Caco-2 (cell line): ENCODE measurements at regions of chr6 and their contacts with region 1.

Region 1: GRCh38 chr6:142207265-142207877 is 60.3 kb downstream of the VTA1 start:
- DNase-seq: peak; percentile 54 to 69
- H3K4me3 ChIP-seq: no peak overlapping the region
- H3K4me3 Mint-ChIP-seq: no peak overlapping the region
- H3K27ac Mint-ChIP-seq: no peak overlapping the region
- H3K4me1 ChIP-seq: no peaks in the 10 kb centered on the region
- H3K4me1 Mint-ChIP-seq: no peaks in the 10 kb centered on the region
- H3K27me3 ChIP-seq: no peaks in the 10 kb centered on the region
- H3K27me3 Mint-ChIP-seq: no peaks in the 10 kb centered on the region
- CTCF ChIP-seq: peak; percentile 81 to 87

Region 2: DNA sequence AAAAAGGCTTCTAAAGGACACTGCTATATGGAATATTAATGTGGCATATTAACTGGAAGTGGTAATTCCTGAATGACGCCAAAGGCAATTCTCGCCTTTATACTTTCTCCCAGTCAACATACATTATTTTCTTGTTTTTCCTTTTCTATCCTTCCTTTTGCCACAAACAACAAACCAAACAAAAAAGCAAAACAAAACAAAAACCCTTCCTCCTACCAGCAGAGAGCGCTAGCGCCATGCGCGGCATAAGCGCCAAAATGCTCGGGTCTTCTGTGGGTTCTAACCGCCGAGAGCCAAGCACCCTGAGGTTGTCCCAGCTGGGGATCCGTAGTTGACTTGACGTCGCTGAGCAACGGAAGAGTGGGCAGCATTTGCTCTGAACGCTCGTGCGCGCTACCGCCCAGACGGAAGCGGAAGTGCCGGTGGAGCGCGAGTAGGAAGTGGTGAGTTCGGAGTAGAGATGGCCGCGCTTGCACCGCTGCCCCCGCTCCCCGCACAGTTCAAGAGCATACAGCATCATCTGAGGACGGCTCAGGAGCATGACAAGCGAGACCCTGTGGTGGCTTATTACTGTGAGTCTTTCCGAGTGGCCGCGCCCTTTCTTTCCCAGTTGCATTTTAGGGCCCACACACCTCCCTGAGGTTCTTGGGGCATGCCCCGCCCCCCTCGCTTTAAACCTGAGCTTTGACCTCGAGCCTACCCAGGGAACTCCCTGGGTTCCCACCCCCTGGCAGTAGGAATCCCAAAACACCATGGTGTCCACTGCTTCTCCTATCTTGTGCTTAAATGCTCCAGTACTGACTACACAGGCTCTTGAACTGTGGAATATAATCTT is 60.3 kb before region 1 on chr6 and contains the starts of genes NMBR and VTA1:
- CTCF ChIA-PET with region 1: interaction called, 15 read pairs
- POLR2A ChIA-PET with region 1: interaction called, 3 read pairs
- intact Hi-C with region 1: loop called (anchors 1 kb)
- DNase-seq: peak; percentile 97 to 99
- H3K4me3 ChIP-seq: peak within 1 kb of the TSS; percentile 55
- H3K4me3 Mint-ChIP-seq: peak within 1 kb of the TSS; percentile 96
- H3K27ac Mint-ChIP-seq: peak within 1 kb of the TSS; percentile 85
- H3K4me1 ChIP-seq: no peaks in the 10 kb centered on the region
- H3K4me1 Mint-ChIP-seq: peaks cover 21% of the 10 kb centered on the region
- H3K27me3 ChIP-seq: no peaks in the 10 kb centered on the region
- H3K27me3 Mint-ChIP-seq: peaks cover 7% of the 10 kb centered on the region
- CTCF ChIP-seq: peak; percentile 85 to 91
- total RNA-seq, gene NMBR: not detected in 2 replicates
- total RNA-seq, gene VTA1: 51.1 and 55.1 TPM in 2 replicates

Region 3: DNA sequence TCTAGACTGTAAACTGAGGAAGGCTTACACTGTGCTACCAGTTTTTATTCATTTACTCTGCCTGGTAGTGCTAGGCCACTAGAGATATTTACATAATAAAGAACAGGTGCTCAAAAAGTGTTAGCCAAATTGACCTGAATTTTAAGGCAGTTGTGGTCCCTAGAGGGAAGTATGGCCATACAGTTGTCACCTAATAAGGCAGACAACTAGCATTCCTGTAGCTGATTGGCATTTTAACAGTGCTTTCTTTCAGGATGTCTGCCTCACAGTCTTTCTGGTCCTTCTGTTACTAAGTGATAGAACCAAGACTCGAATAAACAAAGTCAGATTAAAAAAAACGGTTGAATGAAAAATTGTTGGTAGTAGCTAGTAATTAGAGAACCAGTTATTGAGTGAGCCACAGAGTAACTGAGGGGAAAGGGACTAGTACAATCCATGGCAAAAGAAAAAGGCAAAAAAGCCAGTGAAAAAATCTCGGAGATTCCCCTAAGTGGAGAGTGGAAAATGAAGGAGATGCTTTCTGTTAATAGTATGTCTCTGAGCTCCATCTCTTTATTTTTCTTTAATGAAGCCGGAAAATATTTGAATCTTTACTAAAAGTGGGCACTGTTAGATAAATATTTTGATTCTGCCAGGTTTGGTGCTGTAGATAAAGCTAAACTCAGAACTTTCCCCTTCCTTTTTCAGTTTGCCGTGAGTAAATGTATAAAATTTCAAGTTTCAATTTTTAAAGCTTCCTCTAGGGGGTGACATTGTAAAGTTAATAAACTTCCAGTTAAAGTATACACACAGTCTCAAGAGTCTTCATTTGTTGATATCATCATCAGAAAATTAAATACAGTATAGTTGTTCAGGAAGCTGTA is 51.2 kb before region 1 on chr6:
- CTCF ChIA-PET with region 1: interaction called, 7 read pairs
- POLR2A ChIA-PET with region 1: no interaction called
- intact Hi-C with region 1: loop called (anchors 1 kb)
- DNase-seq: peak in 1 of 2 experiments; percentile 13
- H3K4me3 ChIP-seq: no peak overlapping the region
- H3K4me3 Mint-ChIP-seq: no peak overlapping the region
- H3K27ac Mint-ChIP-seq: no peak overlapping the region
- H3K4me1 ChIP-seq: no peaks in the 10 kb centered on the region
- H3K4me1 Mint-ChIP-seq: no peaks in the 10 kb centered on the region
- H3K27me3 ChIP-seq: no peaks in the 10 kb centered on the region
- H3K27me3 Mint-ChIP-seq: no peaks in the 10 kb centered on the region
- CTCF ChIP-seq: peak; percentile 36 to 46

Region 4: DNA sequence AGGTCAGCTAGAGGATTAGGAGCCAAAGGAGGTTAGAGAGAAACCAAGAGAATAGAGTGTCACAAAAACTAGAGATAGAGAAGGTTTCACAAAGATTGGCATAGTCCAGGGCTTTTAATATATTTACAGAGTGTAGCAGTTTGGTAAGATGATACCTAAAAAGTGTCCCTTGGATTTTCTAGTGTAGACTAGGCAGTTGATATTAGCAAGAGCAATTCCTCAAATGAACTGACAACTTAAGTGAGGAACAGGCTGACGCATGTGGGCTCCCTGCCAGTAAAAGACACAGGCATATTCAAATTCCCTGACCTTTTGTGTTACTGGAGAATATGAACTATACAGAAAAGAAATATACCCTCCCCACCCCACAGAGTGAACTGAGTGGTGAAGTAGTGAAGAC is 20.2 kb before region 1 on chr6:
- CTCF ChIA-PET with region 1: no interaction called
- POLR2A ChIA-PET with region 1: no interaction called
- intact Hi-C with region 1: no loop called
- DNase-seq: no peak
- H3K4me3 ChIP-seq: no peak overlapping the region
- H3K4me3 Mint-ChIP-seq: no peak overlapping the region
- H3K27ac Mint-ChIP-seq: no peak overlapping the region
- H3K4me1 ChIP-seq: no peaks in the 10 kb centered on the region
- H3K4me1 Mint-ChIP-seq: peaks cover 6% of the 10 kb centered on the region
- H3K27me3 ChIP-seq: no peaks in the 10 kb centered on the region
- H3K27me3 Mint-ChIP-seq: no peaks in the 10 kb centered on the region
- CTCF ChIP-seq: no peak